ENCODE measurements at regions of chr9 and their contacts with region 1.

Region 1: GRCh38 chr9:113591001-113591898 is 127.7 kb downstream of the RGS3 start:
- DNase-seq: peak; percentile 75
- CTCF ChIP-seq: peak; percentile 81

Region 2: GRCh38 chr9:113454914-113455761 is 136.1 kb before region 1 on chr9:
- in situ Hi-C with region 1: loop called (anchors 10 kb)
- DNase-seq: no peak
- CTCF ChIP-seq: no peak

Region 3: DNA sequence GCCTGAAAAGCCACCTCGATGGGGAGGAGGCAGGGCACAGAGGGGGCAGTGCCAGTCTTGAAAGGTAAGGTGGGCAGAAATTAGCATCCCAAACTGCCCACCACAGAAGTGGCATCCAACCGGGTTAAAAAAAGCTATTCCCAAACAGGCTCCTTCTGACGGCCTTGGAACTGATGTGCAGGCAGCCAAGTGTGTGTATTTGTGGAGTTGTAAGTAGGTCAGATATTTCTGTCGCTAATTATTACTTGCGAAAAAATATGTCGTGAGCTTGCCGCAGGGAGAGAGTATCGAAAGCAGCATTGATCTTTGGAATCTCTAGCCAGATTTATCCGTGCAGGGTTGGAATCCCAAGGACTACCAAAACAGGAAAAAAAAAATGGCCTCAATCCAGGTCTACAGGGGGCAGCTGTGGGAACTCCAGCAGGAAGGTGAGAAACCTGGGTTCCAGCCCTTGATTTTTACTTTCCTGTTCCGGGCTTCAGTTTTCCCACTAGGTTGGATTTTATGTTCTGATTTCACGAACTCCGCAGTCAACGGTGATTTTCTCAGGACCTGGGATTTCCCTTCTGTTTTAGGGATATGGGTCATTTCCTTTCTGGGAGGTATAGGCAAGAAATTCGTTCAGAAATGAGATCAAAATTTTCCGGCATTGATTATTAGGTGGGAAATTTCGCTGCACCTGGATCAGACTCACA is 73.1 kb after region 1 on chr9:
- in situ Hi-C with region 1: loop called (anchors 5 kb)
- DNase-seq: no peak
- CTCF ChIP-seq: no peak